ENCODE measurements at regions of chr12 and their contacts with region 1.

Region 1: GRCh38 chr12:90940872-90941499 is 14.0 kb downstream of the CCER1 start:
- DNase-seq: no peak
- H3K4me3 ChIP-seq: no peak overlapping the region
- CTCF ChIP-seq: peak; percentile 51

Region 2: GRCh38 chr12:89542912-89543592 is 1397.9 kb before region 1 on chr12:
- CTCF ChIA-PET with region 1: interaction called, 37 read pairs
- POLR2A ChIA-PET with region 1: no interaction called
- DNase-seq: no peak
- H3K4me3 ChIP-seq: no peak overlapping the region
- CTCF ChIP-seq: peak; percentile 77

Region 3: GRCh38 chr12:90695415-90695814 is 245.6 kb before region 1 on chr12:
- CTCF ChIA-PET with region 1: interaction called, 16 read pairs
- POLR2A ChIA-PET with region 1: no interaction called
- DNase-seq: no peak
- H3K4me3 ChIP-seq: no peak overlapping the region
- CTCF ChIP-seq: no peak

Region 4: DNA sequence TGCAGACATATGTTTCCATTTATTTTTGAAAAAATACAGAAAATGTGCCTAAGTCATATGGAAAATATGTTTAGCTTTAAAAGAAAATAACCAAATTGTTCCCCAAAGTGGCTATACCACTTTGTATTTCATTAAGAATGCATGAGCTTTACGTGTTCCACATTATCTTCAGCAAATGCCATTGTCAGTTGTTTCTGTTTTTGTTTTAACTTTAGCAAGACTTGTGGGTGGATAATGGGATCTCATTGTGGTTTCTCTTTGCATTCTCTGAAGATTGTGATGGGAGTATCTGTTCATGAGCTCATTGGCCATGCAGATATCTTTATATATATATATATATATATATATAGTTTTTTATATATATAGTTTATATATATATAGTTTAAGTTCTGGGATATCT is 167.5 kb before region 1 on chr12:
- CTCF ChIA-PET with region 1: no interaction called
- POLR2A ChIA-PET with region 1: no interaction called
- DNase-seq: peak; percentile 33
- H3K4me3 ChIP-seq: no peak overlapping the region
- CTCF ChIP-seq: no peak

Region 5: DNA sequence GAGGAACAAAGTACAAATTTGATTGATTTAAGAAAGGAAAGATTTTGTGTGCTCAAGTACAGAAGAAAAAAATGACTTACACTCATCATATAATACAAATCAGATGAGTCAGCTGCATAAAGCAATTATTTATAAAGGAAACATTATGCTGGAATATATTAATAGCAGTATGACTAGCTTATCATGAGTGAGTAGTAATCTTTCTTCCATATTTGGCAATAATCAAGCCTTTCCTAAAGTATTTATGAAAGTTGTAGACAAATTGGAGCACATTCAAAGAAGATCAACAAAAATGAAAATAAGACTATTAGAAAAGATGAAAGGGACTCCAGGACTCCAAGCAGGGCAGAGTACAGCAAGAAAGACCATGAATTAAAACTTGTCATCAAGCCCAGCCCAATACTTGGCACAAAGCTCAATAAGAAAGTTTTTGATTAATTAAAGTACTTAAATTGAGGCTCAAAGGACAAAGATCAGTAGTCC is 18.8 kb before region 1 on chr12:
- CTCF ChIA-PET with region 1: interaction called, 14 read pairs
- POLR2A ChIA-PET with region 1: no interaction called
- DNase-seq: no peak
- H3K4me3 ChIP-seq: no peak overlapping the region
- CTCF ChIP-seq: no peak

Region 6: DNA sequence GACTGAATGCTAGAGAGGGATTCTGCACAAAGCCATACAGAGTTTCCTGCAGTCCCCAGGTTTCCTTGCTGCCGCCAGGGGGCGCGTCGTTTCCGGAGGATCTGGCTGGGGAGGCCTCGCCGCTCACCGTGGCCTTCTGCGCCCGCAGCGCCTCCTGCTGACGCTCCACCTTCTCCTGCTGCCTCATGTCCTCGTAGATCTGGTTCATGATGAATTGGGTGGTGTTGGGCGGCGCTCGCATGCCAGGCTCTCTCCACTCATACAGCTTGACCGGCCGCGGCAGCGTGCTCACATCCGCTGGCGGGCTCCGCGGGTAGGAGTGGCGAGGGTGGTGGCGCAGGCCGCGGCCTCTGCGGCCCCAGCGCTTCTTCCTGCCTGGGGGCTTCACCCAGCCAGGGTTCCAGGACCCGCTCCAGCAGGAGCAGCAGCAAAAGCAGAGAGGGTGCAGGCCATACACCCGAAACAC is 13.0 kb after region 1 on chr12:
- CTCF ChIA-PET with region 1: interaction called, 34 read pairs
- POLR2A ChIA-PET with region 1: no interaction called
- DNase-seq: no peak
- H3K4me3 ChIP-seq: no peak overlapping the region
- CTCF ChIP-seq: no peak

Region 7: GRCh38 chr12:90959538-90960139 is 18.7 kb after region 1 on chr12:
- CTCF ChIA-PET with region 1: interaction called, 34 read pairs
- POLR2A ChIA-PET with region 1: no interaction called
- DNase-seq: no peak
- H3K4me3 ChIP-seq: no peak overlapping the region
- CTCF ChIP-seq: peak; percentile 55

Region 8: GRCh38 chr12:90987520-90987919 is 46.5 kb after region 1 on chr12:
- CTCF ChIA-PET with region 1: no interaction called
- POLR2A ChIA-PET with region 1: no interaction called
- DNase-seq: no peak
- H3K4me3 ChIP-seq: no peak overlapping the region
- CTCF ChIP-seq: no peak

Region 9: DNA sequence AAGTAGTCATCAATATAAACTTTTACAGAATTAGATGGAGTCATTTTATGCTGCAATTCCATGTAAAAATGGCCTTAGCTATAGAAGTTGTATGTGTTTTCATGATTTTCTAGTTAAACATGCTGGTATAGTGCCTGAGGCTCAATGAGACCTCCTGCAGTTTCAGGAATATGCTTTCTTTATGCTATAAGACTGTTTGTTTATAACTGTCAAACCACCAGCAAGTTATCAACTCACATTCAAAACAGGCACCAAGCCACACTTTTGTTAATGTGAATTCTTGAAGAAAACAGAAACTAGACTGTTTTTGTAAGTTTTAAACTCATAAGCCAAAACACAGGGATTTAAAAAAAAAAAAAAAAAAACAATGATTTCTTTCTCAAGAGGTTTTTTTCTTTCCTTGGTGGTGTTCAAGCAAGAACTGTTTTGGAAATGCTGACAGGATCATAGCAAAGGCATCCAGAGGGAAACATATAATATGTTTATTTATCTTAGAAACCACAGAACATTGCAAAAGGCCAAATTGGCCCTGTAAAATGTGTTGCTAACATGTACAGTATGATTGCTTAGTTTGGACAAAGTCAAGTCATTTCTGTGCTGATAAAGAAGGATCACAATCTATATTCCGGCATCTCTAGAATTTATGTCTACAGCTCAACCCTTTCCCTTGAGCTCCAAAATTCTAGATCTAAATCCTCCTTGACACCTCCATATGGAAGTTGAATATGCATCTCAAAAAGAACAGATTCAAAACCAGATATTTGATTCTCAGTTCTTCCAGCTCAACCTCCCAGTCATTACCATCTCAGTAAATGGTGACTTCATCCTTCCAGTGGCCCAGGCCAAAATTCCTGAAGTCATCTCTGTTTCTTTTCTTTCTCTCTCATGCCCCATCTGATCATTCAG is 199.3 kb after region 1 on chr12:
- CTCF ChIA-PET with region 1: no interaction called
- POLR2A ChIA-PET with region 1: no interaction called
- DNase-seq: peak; percentile 75
- H3K4me3 ChIP-seq: no peak overlapping the region
- CTCF ChIP-seq: no peak

Region 10: DNA sequence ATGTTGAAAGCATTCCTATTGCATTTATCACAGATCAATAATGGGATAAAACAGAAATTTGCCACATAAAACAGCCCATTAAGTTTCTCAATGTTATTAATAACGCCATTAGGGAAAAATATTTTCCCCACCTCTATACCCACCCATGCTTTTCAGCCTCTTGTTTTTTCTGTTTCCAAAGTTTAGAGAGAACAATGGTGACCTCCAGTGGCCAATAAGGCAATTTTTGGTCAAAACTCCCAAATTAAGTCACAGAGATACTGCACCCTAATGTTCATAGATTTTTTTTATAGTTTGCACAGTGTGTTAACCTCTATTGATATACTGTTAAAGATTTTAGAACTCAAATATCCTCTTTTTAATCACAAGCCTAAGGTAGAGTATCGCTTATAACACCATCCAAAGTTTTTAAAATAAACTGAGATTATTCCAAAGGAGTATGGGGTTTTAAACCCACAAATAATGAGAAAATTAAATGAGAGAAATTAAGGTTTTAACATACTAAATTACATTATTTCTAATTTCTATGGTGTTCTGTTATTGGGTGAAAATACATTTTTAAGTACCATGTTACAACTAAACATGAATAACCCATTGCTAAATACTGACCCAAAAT is 426.4 kb after region 1 on chr12:
- CTCF ChIA-PET with region 1: interaction called, 45 read pairs
- POLR2A ChIA-PET with region 1: no interaction called
- DNase-seq: no peak
- H3K4me3 ChIP-seq: no peak overlapping the region
- CTCF ChIP-seq: peak; percentile 31

Measured in AG04449 (cell line).